Left ventricle myocardium inferior (tissue), 1 donor: ENCODE measurements at regions of chr12 and their contacts with region 1.

Region 1: DNA sequence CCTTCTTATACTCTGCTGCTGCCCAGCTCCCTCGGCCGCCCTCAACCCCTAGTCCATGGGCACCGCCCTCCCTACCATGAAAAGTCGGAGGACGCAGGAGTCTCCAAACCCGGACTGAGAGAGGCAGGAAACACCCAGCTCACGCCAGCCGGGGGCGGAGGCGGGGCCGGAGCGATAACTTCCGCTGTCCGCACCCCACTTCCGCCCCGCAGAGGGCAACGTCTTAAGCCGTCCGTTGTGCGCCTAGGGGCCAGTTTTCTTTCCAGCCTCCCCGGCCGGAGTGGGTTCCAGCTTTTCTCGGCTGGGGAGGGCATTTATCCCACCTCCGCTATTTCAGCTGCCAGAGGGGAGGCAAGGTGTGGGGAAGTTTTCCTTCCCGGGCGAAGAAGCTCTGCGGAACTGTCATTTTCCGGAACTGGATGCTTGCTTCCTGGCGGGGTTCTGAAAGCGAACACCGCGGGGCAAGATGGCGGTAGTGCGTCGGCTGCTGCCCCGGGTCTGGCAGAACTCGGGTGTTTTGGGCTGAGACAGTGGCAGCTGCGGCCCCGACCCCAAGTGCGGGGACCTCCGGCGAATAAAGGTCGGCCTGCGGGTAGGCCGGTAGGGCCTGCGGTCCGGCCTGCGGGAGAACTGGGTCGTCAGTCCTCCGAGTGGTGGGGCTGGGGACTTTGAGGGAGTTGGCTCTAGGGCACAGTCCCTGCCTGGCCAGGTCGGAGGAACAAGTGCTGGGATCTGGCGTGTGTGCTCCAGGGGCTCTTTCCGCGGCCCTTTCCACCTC is at the starts of genes KCTD10 and UBE3B:
- DNase-seq: peak; percentile 89
- H3K4me3 ChIP-seq: peak within 1 kb of the TSS; percentile 92
- H3K27ac ChIP-seq: peak within 1 kb of the TSS; percentile 99
- H3K4me1 ChIP-seq: peaks cover 73% of the 10 kb centered on the region
- H3K27me3 ChIP-seq: no peaks in the 10 kb centered on the region
- CTCF ChIP-seq: peak; percentile 28
- total RNA-seq, gene KCTD10: 21.5 TPM
- total RNA-seq, gene UBE3B: 56.0 TPM

Region 2: DNA sequence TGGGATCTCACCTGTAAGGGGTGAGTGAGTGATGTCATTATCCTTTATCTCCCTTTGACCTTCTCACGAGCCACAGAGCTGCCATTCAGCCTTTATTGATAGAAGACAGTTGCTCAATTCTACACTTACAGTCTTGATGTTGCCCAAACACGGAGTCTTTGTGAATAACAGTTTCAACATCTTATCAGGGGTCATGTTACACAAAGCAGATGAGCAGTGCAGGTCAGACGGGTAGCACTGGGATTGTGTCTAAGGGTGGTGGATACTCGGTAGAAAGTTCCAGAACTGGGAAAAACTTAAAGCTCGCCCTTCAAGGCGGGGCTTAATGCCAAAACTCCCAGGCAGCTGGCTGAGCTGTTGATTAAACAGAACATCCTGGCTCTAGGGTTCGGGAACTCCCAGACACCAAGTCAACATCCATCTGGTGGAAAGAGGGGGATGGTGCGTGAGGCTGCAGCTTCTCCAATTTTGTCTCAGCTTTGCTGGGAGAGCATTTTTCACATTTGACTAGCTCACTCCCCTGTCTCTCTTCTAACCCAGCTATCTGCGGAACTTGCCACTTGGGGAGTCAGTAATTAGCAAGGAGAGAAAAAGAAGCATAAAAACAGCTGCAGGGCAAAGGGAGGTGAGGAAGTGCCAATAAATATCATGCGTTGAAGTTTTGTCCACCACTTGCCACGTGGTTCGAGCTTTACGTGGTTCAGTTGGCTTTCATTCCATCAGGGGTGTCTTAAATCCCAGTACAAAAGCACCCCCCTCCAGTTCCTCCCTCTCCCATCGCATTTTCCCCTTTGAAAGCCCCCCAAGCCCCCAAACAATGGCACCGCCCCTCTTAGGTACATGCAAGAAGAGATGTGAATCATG is 199.2 kb before region 1 on chr12:
- intact Hi-C with region 1: no loop called
- DNase-seq: no peak
- H3K4me3 ChIP-seq: no peak overlapping the region
- H3K27ac ChIP-seq: no peak overlapping the region
- H3K4me1 ChIP-seq: peaks cover 11% of the 10 kb centered on the region
- H3K27me3 ChIP-seq: no peaks in the 10 kb centered on the region
- CTCF ChIP-seq: no peak

Region 3: DNA sequence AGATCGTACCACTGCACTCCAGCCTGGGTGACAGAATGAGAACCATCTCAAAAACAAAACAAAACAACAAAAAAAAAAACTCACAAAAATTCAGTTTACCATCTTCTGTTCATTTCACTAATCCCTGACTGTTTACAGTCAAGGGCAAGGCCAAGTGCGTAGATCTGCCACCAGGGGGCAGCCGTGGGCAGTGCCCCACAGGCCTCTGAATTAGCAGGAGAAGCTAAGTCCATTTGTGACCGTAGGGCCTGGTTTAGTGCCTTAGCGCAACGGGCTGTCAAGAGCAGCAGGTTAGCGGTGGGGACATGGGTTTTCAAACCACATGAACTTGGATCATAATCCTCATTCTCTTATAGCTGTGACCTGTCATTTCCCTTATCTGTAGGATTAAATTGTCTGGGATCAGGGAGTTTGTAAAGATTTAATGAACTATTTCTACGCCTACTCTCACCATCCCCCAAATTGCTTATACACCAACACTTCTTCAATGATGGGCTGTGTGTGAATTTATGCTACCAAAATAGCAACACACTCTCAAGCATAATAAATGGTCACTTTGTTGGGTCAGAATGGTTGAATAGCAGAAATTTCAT is 49.2 kb before region 1 on chr12:
- intact Hi-C with region 1: loop called (anchors 5 kb)
- DNase-seq: peak; percentile 78
- H3K4me3 ChIP-seq: no peak overlapping the region
- H3K27ac ChIP-seq: no peak overlapping the region
- H3K4me1 ChIP-seq: peaks cover 7% of the 10 kb centered on the region
- H3K27me3 ChIP-seq: no peaks in the 10 kb centered on the region
- CTCF ChIP-seq: peak; percentile 99